Activated CD4-positive, alpha-beta T cell treated with anti-CD3 and anti-CD28 coated beads for 36 hours (primary cell): ENCODE measurements at regions of chr11 and their contacts with region 1.

Region 1: GRCh38 chr11:58567889-58568512 is 7.7 kb downstream of the LPXN start:
- DNase-seq: peak; percentile 85
- ATAC-seq: peak; percentile 92
- H3K4me3 Mint-ChIP-seq: peak overlapping the region; percentile 32
- H3K27ac Mint-ChIP-seq: peak overlapping the region; percentile 76
- H3K4me1 Mint-ChIP-seq: peaks cover 64% of the 10 kb centered on the region
- H3K27me3 Mint-ChIP-seq: no peaks in the 10 kb centered on the region

Region 2: GRCh38 chr11:58549644-58550043 is 18.4 kb before region 1 on chr11:
- CTCF ChIA-PET with region 1: interaction called, 38 read pairs
- POLR2A ChIA-PET with region 1: no interaction called
- intact Hi-C with region 1: no loop called
- DNase-seq: no peak
- ATAC-seq: no peak
- H3K4me3 Mint-ChIP-seq: no peak overlapping the region
- H3K27ac Mint-ChIP-seq: no peak overlapping the region
- H3K4me1 Mint-ChIP-seq: peaks cover 25% of the 10 kb centered on the region
- H3K27me3 Mint-ChIP-seq: no peaks in the 10 kb centered on the region

Region 3: DNA sequence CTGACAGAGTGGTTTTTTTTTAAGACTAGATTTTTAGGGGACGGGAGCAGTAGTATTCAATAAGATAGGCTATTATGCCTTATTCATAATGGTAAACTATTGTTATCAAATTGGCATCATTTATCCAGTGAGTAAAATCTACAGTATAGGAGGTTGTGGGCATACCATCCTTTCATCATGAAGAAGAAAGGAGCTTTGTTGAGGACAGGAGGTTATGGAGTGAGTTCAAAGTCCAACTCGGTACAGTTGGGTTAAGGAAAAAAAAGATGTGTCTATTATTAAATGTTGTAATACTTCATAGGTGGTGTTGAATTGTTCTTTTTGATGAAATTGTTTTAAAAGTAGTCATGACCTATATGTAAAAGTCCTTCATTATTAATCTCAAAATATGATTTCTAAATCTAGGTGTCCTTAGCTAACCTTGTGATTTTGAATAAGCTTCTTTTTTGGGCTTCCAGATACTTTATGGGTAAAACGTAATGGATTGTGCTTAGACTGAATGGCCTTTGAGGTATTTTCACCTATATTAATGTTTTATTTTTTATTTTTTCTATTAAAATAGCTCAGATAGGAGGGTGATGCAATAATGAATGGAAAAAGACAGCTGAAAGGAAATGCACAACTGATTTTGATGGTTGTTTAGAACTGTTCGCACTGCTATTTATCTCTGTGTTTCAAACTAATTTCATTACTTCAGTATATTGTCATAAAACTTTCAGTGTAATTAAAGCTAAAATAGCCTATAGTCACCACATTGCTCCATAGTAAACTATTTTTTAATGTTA is 39.1 kb after region 1 on chr11:
- CTCF ChIA-PET with region 1: interaction called, 12 read pairs
- POLR2A ChIA-PET with region 1: no interaction called
- intact Hi-C with region 1: no loop called
- DNase-seq: no peak
- ATAC-seq: no peak
- H3K4me3 Mint-ChIP-seq: no peak overlapping the region
- H3K27ac Mint-ChIP-seq: peak overlapping the region; percentile 55
- H3K4me1 Mint-ChIP-seq: peaks cover 74% of the 10 kb centered on the region
- H3K27me3 Mint-ChIP-seq: no peaks in the 10 kb centered on the region

Region 4: GRCh38 chr11:58622344-58622743 is 54.3 kb after region 1 on chr11 and contains the start of gene CNTF:
- CTCF ChIA-PET with region 1: interaction called, 89 read pairs
- POLR2A ChIA-PET with region 1: interaction called, 3 read pairs
- intact Hi-C with region 1: no loop called
- DNase-seq: no peak
- ATAC-seq: no peak
- H3K4me3 Mint-ChIP-seq: no peak within 1 kb of the TSS
- H3K27ac Mint-ChIP-seq: peak within 1 kb of the TSS; percentile 66
- H3K4me1 Mint-ChIP-seq: peaks cover 29% of the 10 kb centered on the region
- H3K27me3 Mint-ChIP-seq: no peaks in the 10 kb centered on the region
- total RNA-seq, gene CNTF: 1.6 to 3.4 TPM

Region 5: DNA sequence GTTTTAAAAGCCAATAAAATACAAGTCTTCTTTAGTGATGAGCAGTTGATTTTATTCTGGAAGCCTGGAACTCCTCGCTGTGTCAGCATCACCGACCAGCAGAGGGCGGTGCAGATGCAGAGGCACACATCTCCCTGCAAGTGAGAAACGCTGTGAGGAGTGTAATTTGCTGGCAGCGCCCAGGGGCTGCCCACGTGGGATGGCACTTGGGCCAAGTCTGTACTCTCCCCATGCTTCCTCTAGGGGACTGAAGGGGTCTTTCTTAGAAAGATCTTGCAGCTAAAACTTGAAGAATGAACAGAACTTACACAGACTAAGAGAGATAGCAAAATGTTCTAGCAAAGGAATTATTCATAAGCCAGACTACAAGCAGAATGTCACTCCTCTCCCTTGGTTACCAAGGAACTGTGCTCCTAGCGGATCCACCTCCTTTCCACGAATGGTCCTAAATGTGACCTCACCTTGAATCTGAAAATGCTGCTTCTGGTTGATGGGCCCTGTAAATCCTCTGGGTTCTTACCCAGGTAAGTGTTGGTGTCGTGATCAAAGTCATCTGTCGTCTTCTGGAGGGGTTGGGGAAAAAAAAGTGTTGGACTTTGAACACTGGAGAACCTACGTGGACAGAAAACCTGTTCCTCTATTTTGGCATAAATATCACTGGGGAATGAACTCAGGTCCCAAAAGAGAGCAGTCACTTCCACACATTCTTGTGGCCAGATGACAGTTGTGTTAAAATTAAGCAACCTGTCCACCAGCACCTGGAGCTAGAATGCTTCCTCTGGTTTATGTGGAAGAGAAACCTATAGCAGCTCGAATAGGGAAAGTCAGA is 86.3 kb after region 1 on chr11:
- CTCF ChIA-PET with region 1: interaction called, 10 read pairs
- POLR2A ChIA-PET with region 1: no interaction called
- intact Hi-C with region 1: no loop called
- DNase-seq: peak; percentile 90
- ATAC-seq: peak; percentile 87
- H3K4me3 Mint-ChIP-seq: no peak overlapping the region
- H3K27ac Mint-ChIP-seq: peak overlapping the region; percentile 62
- H3K4me1 Mint-ChIP-seq: peaks cover 20% of the 10 kb centered on the region
- H3K27me3 Mint-ChIP-seq: no peaks in the 10 kb centered on the region